Aorta (tissue), 5 donors: ENCODE measurements at regions of chr1 and their contacts with region 1.

Region 1: DNA sequence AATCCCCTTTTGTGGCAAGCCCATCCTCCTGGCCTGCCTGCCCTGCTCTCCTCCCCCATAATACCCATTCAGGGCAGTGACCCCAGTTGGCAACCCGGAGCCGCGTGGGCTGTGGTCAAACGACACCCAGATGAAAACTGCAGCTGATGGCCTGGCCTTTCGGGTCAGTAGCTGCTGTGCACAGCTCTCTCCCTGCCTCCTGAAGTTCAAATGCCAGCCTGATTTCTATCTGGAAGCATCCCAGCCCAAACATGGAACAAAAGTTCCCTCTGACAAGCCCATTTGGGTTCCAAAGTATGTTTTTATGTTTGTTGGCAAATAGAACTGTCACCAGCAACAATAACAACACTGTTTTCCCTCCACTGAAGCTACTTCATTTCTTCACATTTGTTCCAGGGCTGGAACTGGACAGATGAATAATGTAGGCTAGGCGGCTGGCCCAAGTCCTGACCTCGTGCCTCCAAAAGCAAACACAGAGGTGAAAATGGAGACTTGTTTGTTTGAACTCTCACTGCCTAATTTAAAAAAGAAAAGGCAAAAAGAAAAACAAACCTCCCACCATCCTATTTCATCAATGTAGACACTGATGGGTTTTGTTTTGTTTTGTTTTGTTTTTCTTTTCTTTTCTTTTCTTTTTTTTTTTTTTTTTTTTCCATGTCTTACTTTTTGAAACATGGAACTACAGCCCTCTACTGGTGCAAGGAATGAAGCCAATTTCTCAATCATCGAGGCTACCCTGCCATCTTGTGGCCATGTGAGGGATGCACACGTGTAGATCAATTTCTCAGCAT is 179.0 kb downstream of the ADSS2 start:
- DNase-seq: peak in 1 of 2 donors; percentile 62
- ATAC-seq: peak; percentile 95
- H3K4me3 ChIP-seq: no peak overlapping the region
- H3K27ac ChIP-seq: peak overlapping the region in 1 of 2 donors; percentile 37
- H3K4me1 ChIP-seq: no peaks in the 10 kb centered on the region
- H3K27me3 ChIP-seq: no peaks in the 10 kb centered on the region

Region 2: GRCh38 chr1:243343970-243344937 is 928.4 kb before region 1 on chr1:
- intact Hi-C with region 1: loop called (anchors 2 kb)
- DNase-seq: no peak
- ATAC-seq: no peak
- H3K4me3 ChIP-seq: no peak overlapping the region
- H3K27ac ChIP-seq: no peak overlapping the region
- H3K4me1 ChIP-seq: no peaks in the 10 kb centered on the region
- H3K27me3 ChIP-seq: no peaks in the 10 kb centered on the region

Region 3: GRCh38 chr1:243748706-243749283 is 523.9 kb before region 1 on chr1:
- intact Hi-C with region 1: loop called in 1 of 2 experiments (anchors 10 kb)
- DNase-seq: no peak
- ATAC-seq: peak; percentile 89
- H3K4me3 ChIP-seq: no peak overlapping the region
- H3K27ac ChIP-seq: no peak overlapping the region
- H3K4me1 ChIP-seq: no peaks in the 10 kb centered on the region
- H3K27me3 ChIP-seq: no peaks in the 10 kb centered on the region

Region 4: GRCh38 chr1:243939167-243939848 is 333.4 kb before region 1 on chr1:
- intact Hi-C with region 1: loop called in 1 of 2 experiments (anchors 10 kb)
- DNase-seq: no peak
- ATAC-seq: no peak
- H3K4me3 ChIP-seq: no peak overlapping the region
- H3K27ac ChIP-seq: no peak overlapping the region
- H3K4me1 ChIP-seq: no peaks in the 10 kb centered on the region
- H3K27me3 ChIP-seq: no peaks in the 10 kb centered on the region

Region 5: DNA sequence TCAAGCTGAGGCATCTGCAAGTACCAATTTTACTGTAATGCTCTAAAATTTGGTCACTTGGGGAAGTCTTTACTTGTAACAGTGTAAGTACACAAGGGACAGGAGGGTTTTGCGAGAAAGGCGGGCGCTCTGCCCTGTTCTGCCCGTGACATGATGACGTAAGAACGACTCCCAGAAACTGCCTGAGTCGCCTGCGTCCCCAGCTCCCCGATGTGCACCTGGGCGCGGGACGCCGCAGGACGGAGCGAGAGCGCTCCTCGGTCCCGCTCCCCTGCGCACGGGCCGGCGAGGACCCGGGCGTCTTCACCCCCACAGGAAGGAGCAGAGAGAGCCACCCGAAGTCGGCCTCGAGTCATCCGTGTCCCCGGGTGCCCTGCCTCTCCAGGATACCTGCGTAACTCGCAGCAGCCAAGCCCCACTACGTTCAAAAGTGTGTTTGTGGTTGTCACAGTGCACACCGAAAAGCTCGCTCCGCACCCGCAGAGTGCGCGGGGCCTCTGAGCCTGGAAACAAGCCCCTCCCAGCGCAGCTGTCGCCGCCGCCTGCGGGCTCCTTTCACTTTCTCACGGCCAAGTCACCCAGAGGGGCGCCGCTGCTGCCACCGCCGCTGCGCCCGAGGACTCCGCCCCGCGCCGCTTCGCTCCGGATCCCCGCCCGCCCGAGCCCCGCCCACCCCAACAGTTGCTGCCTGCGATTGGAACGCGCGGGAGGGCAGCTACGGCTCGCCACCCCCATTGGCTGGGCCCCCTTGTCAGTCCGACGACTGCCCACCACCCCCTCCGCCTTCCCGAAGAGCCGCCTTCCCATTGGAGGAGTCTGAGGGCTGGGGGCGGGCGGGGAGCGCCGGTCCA is 224.8 kb before region 1 on chr1:
- intact Hi-C with region 1: loop called in 1 of 2 experiments (anchors 5 kb)
- DNase-seq: peak; percentile 99 to 100
- ATAC-seq: peak; percentile 98
- H3K4me3 ChIP-seq: peak overlapping the region; percentile 58 to 82
- H3K27ac ChIP-seq: peak overlapping the region; percentile 50 to 88
- H3K4me1 ChIP-seq: no peaks in the 10 kb centered on the region
- H3K27me3 ChIP-seq: no peaks in the 10 kb centered on the region

Region 6: GRCh38 chr1:244054924-244055263 is 217.8 kb before region 1 on chr1:
- intact Hi-C with region 1: loop called in 1 of 2 experiments (anchors 5 kb)
- DNase-seq: no peak
- ATAC-seq: no peak
- H3K4me3 ChIP-seq: no peak overlapping the region
- H3K27ac ChIP-seq: no peak overlapping the region
- H3K4me1 ChIP-seq: no peaks in the 10 kb centered on the region
- H3K27me3 ChIP-seq: no peaks in the 10 kb centered on the region

Region 7: GRCh38 chr1:244163861-244164562 is 108.7 kb before region 1 on chr1:
- intact Hi-C with region 1: no loop called
- DNase-seq: no peak
- ATAC-seq: peak; percentile 56
- H3K4me3 ChIP-seq: no peak overlapping the region
- H3K27ac ChIP-seq: no peak overlapping the region
- H3K4me1 ChIP-seq: peaks cover 0 to 1% of the 10 kb centered on the region in 2 donors
- H3K27me3 ChIP-seq: no peaks in the 10 kb centered on the region